ENCODE measurements at regions of chr11 and their contacts with region 1.

Region 1: DNA sequence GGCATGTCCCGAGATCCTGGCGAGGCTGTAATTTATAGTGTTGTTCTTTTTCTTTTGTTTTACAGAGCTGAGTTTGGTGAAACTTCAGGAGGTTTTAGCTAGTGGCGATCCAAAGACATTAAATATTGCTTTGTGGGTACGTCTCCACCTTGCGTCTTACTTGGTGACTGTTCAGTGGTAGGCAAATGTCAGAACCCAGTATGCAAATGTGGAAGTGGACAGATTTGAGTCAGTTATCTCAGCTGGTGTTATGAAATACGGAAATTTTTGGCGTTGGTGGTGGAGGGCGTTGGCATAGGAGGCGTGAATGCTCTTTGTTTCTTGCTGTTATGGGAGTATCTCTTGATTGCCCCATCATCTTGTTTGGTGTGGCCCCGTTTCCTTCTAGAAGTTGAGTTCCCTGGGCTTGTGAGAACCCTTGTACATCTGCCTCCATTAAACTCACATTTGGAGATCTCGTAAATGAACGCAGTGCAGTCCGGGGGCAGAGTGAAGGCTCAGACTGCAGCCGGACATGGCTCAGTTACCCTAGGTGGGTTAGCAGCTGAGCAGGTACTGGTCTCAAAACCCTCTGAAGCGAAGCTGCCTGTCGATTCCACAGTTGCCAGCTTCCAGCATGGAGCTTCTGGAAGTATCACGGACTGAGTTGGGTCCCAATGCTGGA is 39.9 kb downstream of the PTPRJ start:
- DNase-seq: peak; percentile 75
- ATAC-seq: peak; percentile 79
- H3K4me3 ChIP-seq: peak overlapping the region in 2 of 5 experiments; percentile 32 to 55
- H3K4me3 Mint-ChIP-seq: peak overlapping the region; percentile 54
- H3K27ac ChIP-seq: peak overlapping the region; percentile 53 to 55
- H3K27ac Mint-ChIP-seq: peak overlapping the region; percentile 32
- H3K4me1 ChIP-seq: peaks cover 62 to 87% of the 10 kb centered on the region in 2 donors
- H3K4me1 Mint-ChIP-seq: peaks cover 79% of the 10 kb centered on the region
- H3K27me3 ChIP-seq: no peaks in the 10 kb centered on the region
- H3K27me3 Mint-ChIP-seq: no peaks in the 10 kb centered on the region
- CTCF ChIP-seq: peak; percentile 26

Region 2: DNA sequence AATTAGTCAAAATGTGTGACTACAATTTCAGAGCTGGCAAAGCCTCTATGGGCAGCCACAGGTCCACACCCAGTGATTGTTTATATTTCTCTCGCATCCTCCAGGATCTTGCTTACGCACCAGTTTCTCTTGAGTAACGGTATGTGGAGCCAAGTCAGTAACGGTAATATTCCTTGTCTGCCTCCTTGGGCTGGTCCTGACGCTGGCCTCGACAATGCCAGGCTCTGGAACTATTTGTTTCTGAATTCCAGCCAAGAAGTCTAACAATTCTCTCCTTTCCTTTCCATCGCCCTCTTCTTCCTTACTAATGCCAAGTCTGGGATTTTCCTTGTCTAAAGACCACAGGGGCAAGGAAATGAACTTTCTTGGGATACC is 162.1 kb before region 1 on chr11:
- CTCF ChIA-PET with region 1: interaction called, 3 read pairs
- POLR2A ChIA-PET with region 1: no interaction called
- intact Hi-C with region 1: loop called (anchors 10 kb)
- DNase-seq: no peak
- ATAC-seq: no peak
- H3K4me3 ChIP-seq: peak overlapping the region in 1 of 5 experiments; percentile 54
- H3K4me3 Mint-ChIP-seq: peak overlapping the region; percentile 63
- H3K27ac ChIP-seq: peak overlapping the region; percentile 80 to 84
- H3K27ac Mint-ChIP-seq: peak overlapping the region; percentile 86
- H3K4me1 ChIP-seq: peaks cover 98 to 99% of the 10 kb centered on the region in 2 donors
- H3K4me1 Mint-ChIP-seq: peaks cover 64% of the 10 kb centered on the region
- H3K27me3 ChIP-seq: no peaks in the 10 kb centered on the region
- H3K27me3 Mint-ChIP-seq: no peaks in the 10 kb centered on the region
- CTCF ChIP-seq: no peak

Region 3: DNA sequence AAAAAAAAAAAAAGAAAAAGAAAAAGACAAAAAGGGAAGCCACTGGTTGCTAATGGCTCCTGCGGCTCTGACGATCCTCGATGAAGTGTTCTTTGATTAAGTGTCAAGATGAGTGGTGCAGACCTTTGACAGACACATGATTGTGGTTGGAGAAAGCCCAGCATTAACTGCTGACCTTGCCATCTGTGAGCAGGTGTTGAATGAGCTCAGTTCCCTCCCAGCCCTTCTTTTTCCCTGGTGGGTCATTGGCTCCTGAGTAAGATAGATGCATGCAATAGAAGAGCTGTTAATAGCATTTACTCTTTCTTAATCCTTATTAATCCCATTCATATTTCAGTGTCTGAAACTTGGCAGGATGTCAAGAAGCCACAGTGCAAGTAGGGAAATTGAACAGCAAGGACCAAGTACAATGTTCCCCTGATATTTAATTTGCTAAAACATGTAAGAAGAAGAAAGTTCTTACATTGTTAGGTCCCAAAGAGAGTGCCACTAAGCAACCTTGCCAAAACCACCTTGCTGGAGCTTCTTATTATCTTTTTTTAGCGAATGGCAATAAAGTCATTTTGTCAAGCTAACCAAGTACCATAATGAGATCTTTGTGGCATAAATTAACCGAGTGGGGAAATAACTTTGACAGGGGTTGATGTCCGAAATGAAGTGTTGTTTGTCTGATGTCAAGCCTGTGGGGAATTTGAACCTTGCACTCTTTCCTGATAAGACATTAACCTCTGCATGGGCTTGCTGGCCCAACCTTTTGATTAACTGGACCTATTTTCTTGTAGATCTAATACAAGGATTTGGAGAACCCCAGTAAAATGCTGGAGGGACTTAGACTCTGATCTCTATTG is 73.8 kb after region 1 on chr11:
- CTCF ChIA-PET with region 1: no interaction called
- POLR2A ChIA-PET with region 1: no interaction called
- intact Hi-C with region 1: no loop called
- DNase-seq: no peak
- ATAC-seq: peak; percentile 14
- H3K4me3 ChIP-seq: no peak overlapping the region
- H3K4me3 Mint-ChIP-seq: no peak overlapping the region
- H3K27ac ChIP-seq: no peak overlapping the region
- H3K27ac Mint-ChIP-seq: peak overlapping the region; percentile 56
- H3K4me1 ChIP-seq: peaks cover 4 to 14% of the 10 kb centered on the region in 2 donors
- H3K4me1 Mint-ChIP-seq: peaks cover 42% of the 10 kb centered on the region
- H3K27me3 ChIP-seq: no peaks in the 10 kb centered on the region
- H3K27me3 Mint-ChIP-seq: no peaks in the 10 kb centered on the region
- CTCF ChIP-seq: no peak